Left ventricle myocardium inferior (tissue), 1 donor: ENCODE measurements at regions of chr16 and their contacts with region 1.

Region 1: GRCh38 chr16:68237243-68238028 is 1.5 kb upstream of the ESRP2 start:
- DNase-seq: peak; percentile 98
- H3K4me3 ChIP-seq: peak overlapping the region; percentile 74
- H3K27ac ChIP-seq: peak overlapping the region; percentile 91
- H3K4me1 ChIP-seq: peaks cover 34% of the 10 kb centered on the region
- H3K27me3 ChIP-seq: no peaks in the 10 kb centered on the region
- CTCF ChIP-seq: no peak

Region 2: GRCh38 chr16:67244387-67245185 is 992.9 kb before region 1 on chr16:
- intact Hi-C with region 1: loop called (anchors 5 kb)
- DNase-seq: peak; percentile 77
- H3K4me3 ChIP-seq: peak overlapping the region; percentile 88
- H3K27ac ChIP-seq: peak overlapping the region; percentile 98
- H3K4me1 ChIP-seq: peaks cover 97% of the 10 kb centered on the region
- H3K27me3 ChIP-seq: peaks cover 10% of the 10 kb centered on the region
- CTCF ChIP-seq: peak; percentile 15